ENCODE measurements at regions of chr7 and their contacts with region 1.

Region 1: GRCh38 chr7:95511716-95512260 is 26.0 kb downstream of the ASB4 start:
- DNase-seq: no peak
- H3K4me3 ChIP-seq: no peak overlapping the region
- CTCF ChIP-seq: peak; percentile 80

Region 2: DNA sequence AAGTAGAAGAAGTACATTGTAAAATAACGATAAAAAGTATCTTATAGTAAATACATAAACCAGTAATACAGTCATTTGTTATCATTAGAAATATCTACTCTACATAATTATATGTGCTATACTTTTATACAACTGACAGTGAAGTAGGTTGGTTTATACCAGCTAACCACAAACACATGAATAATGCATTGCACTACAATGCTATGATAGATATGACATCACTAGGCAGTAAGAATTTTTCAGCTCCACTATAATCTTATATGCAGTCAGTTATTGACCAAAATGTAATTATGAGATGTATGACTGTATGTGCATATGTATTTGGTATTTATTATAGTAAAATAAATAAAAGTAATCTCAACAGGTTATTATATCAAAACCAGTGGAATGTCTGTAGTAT is 832.4 kb before region 1 on chr7:
- CTCF ChIA-PET with region 1: no interaction called
- POLR2A ChIA-PET with region 1: no interaction called
- DNase-seq: no peak
- H3K4me3 ChIP-seq: no peak overlapping the region
- CTCF ChIP-seq: no peak

Region 3: DNA sequence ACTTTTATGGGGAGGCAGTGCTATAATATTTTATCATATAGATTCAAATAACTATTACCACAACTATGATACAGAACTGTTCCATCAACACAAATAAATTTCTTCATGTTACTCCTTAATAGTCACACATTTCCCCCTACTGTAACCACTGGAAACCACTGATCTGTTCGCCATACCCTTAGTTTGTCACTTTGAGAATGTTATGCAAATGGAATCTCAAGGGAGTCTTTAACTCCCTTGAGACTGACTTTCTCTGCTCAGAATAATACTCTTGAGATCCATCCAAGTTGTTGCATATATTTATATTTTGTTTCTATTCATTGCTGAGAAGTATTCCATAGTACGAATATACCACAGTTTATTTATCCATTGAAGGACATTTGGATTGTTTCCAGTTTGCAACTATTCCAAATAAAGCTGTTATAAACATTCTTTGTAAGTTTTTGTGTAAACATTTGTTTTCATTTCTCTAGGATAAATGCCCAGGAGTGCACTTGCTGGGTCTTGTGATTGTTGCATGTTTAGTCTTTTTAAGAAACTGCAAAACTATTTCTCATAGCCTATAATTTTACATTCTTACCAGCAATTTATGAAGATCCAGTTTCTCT is 57.2 kb before region 1 on chr7:
- CTCF ChIA-PET with region 1: no interaction called
- POLR2A ChIA-PET with region 1: no interaction called
- DNase-seq: no peak
- H3K4me3 ChIP-seq: no peak overlapping the region
- CTCF ChIP-seq: no peak

Region 4: DNA sequence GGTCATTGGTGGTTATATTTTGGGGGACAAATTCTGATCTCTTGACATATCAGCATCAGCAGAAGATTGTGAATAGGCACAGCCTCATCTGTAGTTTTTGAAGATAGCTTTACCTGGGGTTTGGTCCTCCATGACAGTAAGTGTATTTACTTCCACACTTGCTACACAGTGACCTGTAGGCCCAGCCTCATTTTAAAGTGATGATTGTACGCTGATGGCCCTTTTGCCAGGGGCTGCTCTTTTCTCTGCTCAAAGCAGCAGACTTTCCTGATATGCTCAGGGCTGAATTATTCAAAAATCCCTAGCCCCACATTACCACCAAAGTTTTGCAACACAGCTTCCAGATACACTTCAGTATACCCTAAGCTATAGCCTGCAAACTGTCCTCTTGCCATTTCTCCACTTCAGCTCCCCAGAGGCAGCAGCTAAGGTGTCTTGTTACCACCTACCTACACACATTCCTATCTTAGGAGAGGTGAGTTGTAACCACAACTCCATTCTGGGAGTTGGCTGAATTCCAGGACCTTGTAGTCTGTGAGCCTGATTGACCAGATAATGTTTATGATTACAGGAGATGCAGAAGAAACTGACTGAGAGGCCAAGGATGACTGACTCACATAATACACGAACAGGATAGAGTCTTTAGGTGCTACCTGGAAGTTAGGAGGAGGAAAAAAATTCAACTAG is 20.0 kb before region 1 on chr7:
- CTCF ChIA-PET with region 1: interaction called, 17 read pairs
- POLR2A ChIA-PET with region 1: no interaction called
- DNase-seq: no peak
- H3K4me3 ChIP-seq: no peak overlapping the region
- CTCF ChIP-seq: no peak

Region 5: DNA sequence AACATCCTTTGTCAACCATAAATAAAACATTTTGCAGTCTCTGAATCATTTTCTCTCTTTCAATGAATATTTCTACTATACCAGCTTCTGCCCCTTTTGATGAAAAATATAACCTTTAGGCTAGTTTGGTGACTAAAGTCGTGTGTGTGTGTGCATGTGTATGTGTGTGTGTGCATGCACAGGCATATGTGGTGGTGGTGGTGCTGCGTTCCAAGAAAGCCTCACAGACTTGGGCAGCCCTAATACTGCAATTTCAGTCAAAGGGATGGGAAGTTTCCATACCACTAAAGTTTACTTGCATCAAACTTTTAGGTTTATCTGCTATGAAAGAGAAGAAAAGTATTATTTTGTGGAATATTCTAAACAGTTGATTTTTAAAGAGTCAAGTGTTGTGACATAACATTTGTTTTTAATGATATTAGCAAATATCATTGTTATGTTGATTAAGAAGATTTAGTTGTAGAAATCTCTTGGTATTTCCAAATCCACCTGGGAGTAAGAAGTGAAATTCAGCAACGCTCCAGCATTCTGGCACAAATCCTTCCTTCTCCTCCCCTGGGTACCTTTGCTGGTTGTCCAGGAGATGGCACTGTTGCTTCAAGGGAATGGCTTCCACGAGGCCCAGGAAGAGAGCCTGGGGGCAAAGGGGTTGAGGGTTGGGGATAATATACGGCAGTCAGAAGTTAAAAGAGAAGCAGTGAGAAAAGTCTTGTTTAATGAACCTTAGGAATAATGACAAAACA is 15.4 kb after region 1 on chr7:
- CTCF ChIA-PET with region 1: interaction called, 139 read pairs
- POLR2A ChIA-PET with region 1: no interaction called
- DNase-seq: no peak
- H3K4me3 ChIP-seq: no peak overlapping the region
- CTCF ChIP-seq: peak; percentile 84

Region 6: DNA sequence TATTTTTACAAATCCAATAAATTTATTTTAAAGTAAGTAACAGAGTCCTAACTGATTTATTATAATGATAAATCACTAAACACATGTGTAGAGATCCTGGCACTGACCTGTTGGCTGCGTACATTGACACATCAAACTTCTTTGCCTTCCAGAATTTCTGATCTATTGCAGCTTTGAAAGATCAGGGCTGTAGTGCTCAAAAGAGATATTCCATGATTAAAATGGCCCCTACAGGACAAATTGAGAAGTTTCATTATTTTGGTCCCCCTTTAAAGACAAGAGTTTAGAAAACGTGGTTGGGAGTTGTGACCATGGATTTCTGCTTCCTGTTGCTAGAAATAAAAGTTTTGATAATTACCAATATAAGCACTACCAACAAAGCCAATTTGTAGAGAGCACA is 172.2 kb after region 1 on chr7:
- CTCF ChIA-PET with region 1: interaction called, 403 read pairs
- POLR2A ChIA-PET with region 1: no interaction called
- DNase-seq: no peak
- H3K4me3 ChIP-seq: no peak overlapping the region
- CTCF ChIP-seq: no peak

Measured in AG04449 (cell line).